CD4-positive, alpha-beta memory T cell (primary cell): ENCODE measurements at regions of chr16 and their contacts with region 1.

Region 1: DNA sequence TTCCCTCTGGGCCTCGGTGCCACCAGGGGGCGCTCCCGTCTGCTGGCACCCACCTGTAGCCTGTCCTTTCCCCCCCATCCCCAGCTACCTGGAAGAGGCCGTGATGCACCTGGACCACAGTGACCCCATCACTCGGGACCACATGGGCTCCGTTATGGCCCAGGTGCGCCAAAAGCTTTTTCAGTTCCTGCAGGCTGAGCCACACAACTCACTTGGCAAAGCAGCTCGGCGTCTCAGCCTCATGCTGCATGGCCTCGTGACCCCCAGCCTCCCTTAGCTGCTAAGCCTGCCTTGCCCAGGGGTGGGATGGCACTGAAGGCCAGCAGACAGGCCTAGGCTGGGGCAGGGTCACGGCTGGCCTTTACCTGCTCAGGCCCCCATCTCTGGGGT is 818 bp upstream of the NRN1L start:
- DNase-seq: peak; percentile 68 to 75 (median 71)
- H3K4me3 ChIP-seq: no peak overlapping the region
- H3K4me3 Mint-ChIP-seq: no peak overlapping the region
- H3K27ac ChIP-seq: no peak overlapping the region
- H3K27ac Mint-ChIP-seq: peak overlapping the region in 4 of 7 donors; percentile 22 to 83 (median 40)
- H3K4me1 ChIP-seq: no peaks in the 10 kb centered on the region
- H3K4me1 Mint-ChIP-seq: peaks cover 0 to 1% (median 0%) of the 10 kb centered on the region in 4 donors
- H3K27me3 ChIP-seq: no peaks in the 10 kb centered on the region
- H3K27me3 Mint-ChIP-seq: no peaks in the 10 kb centered on the region

Region 2: GRCh38 chr16:67767953-67768352 is 115.9 kb before region 1 on chr16:
- CTCF ChIA-PET with region 1: no interaction called
- POLR2A ChIA-PET with region 1: no interaction called
- intact Hi-C with region 1: no loop called
- DNase-seq: no peak
- H3K4me3 ChIP-seq: no peak overlapping the region
- H3K4me3 Mint-ChIP-seq: no peak overlapping the region
- H3K27ac ChIP-seq: no peak overlapping the region
- H3K27ac Mint-ChIP-seq: no peak overlapping the region
- H3K4me1 ChIP-seq: no peaks in the 10 kb centered on the region
- H3K4me1 Mint-ChIP-seq: peaks cover 1 to 10% (median 8%) of the 10 kb centered on the region in 4 donors
- H3K27me3 ChIP-seq: no peaks in the 10 kb centered on the region
- H3K27me3 Mint-ChIP-seq: no peaks in the 10 kb centered on the region

Region 3: GRCh38 chr16:67910158-67910557 is 26.3 kb after region 1 on chr16:
- CTCF ChIA-PET with region 1: interaction called, 10 read pairs
- POLR2A ChIA-PET with region 1: no interaction called
- intact Hi-C with region 1: no loop called
- DNase-seq: no peak
- H3K4me3 ChIP-seq: no peak overlapping the region
- H3K4me3 Mint-ChIP-seq: no peak overlapping the region
- H3K27ac ChIP-seq: no peak overlapping the region
- H3K27ac Mint-ChIP-seq: peak overlapping the region in 1 of 7 donors; percentile 8
- H3K4me1 ChIP-seq: no peaks in the 10 kb centered on the region
- H3K4me1 Mint-ChIP-seq: peaks cover 3 to 26% (median 12%) of the 10 kb centered on the region in 4 donors
- H3K27me3 ChIP-seq: no peaks in the 10 kb centered on the region
- H3K27me3 Mint-ChIP-seq: no peaks in the 10 kb centered on the region

Region 4: GRCh38 chr16:67928561-67929364 is 44.9 kb after region 1 on chr16:
- CTCF ChIA-PET with region 1: interaction called, 61 read pairs
- POLR2A ChIA-PET with region 1: interaction called, 6 read pairs
- intact Hi-C with region 1: loop called (anchors 1 kb)
- DNase-seq: peak; percentile 70 to 75 (median 72)
- H3K4me3 ChIP-seq: no peak overlapping the region
- H3K4me3 Mint-ChIP-seq: no peak overlapping the region
- H3K27ac ChIP-seq: no peak overlapping the region
- H3K27ac Mint-ChIP-seq: peak overlapping the region; percentile 22 to 74 (median 69)
- H3K4me1 ChIP-seq: peaks cover 7% of the 10 kb centered on the region
- H3K4me1 Mint-ChIP-seq: peaks cover 3 to 16% (median 8%) of the 10 kb centered on the region in 4 donors
- H3K27me3 ChIP-seq: no peaks in the 10 kb centered on the region
- H3K27me3 Mint-ChIP-seq: no peaks in the 10 kb centered on the region

Region 5: DNA sequence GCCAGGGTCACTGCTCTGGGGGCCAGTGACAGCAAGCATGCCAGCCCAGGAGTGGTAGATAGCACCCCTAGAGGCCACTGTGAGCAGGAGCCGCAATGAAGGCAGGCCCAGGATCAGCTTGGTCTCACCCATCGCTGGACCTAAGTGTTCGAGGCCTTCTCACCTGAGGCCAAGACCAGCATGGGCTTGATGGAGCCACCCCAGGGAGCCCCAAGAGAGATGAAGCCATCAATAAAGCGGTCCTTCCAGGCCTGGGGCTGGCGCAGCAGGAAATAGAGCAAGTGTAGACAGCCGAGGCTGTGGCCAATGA is 58.3 kb after region 1 on chr16:
- CTCF ChIA-PET with region 1: interaction called, 25 read pairs
- POLR2A ChIA-PET with region 1: interaction called, 8 read pairs
- intact Hi-C with region 1: no loop called
- DNase-seq: peak in 4 of 5 donors; percentile 17 to 32 (median 22)
- H3K4me3 ChIP-seq: no peak overlapping the region
- H3K4me3 Mint-ChIP-seq: no peak overlapping the region
- H3K27ac ChIP-seq: peak overlapping the region; percentile 9
- H3K27ac Mint-ChIP-seq: peak overlapping the region in 2 of 7 donors; percentile 70 to 79
- H3K4me1 ChIP-seq: peaks cover 39% of the 10 kb centered on the region
- H3K4me1 Mint-ChIP-seq: peaks cover 18 to 33% (median 25%) of the 10 kb centered on the region in 4 donors
- H3K27me3 ChIP-seq: no peaks in the 10 kb centered on the region
- H3K27me3 Mint-ChIP-seq: no peaks in the 10 kb centered on the region

Region 6: DNA sequence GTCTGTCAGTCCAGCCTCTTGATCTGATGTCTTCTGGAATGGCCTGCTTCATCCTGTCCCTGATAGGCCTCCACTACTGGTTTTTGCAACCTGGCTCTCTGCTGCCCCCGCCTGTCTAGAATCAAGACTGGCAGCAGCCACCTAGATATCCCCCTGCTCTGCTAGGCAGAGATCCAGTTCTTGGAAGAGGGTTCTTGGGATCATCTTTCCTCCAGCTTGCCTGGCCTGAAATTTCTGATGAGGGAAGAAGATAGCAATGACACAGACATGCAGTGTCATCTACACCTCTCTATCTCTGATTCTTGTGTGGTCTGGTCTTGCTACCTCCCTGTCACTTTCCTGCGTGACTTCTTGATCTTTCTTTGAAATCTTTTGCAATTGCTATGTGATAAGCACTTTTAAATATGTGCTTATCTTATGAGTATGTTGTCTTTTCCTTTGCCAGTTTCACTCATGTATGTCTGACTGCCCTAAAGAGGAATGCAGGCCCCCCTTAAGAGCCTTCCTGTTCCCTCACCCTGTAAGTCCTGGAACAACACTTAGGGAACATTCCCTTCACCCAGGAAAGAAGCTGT is 181.0 kb after region 1 on chr16:
- CTCF ChIA-PET with region 1: interaction called, 9 read pairs
- POLR2A ChIA-PET with region 1: no interaction called
- intact Hi-C with region 1: loop called (anchors 1 kb)
- DNase-seq: peak; percentile 60 to 78 (median 68)
- H3K4me3 ChIP-seq: no peak overlapping the region
- H3K4me3 Mint-ChIP-seq: peak overlapping the region in 6 of 8 donors; percentile 1 to 74 (median 34)
- H3K27ac ChIP-seq: peak overlapping the region; percentile 42
- H3K27ac Mint-ChIP-seq: peak overlapping the region; percentile 79 to 96 (median 84)
- H3K4me1 ChIP-seq: peaks cover 79% of the 10 kb centered on the region
- H3K4me1 Mint-ChIP-seq: peaks cover 51 to 90% (median 71%) of the 10 kb centered on the region in 4 donors
- H3K27me3 ChIP-seq: no peaks in the 10 kb centered on the region
- H3K27me3 Mint-ChIP-seq: no peaks in the 10 kb centered on the region

Region 7: DNA sequence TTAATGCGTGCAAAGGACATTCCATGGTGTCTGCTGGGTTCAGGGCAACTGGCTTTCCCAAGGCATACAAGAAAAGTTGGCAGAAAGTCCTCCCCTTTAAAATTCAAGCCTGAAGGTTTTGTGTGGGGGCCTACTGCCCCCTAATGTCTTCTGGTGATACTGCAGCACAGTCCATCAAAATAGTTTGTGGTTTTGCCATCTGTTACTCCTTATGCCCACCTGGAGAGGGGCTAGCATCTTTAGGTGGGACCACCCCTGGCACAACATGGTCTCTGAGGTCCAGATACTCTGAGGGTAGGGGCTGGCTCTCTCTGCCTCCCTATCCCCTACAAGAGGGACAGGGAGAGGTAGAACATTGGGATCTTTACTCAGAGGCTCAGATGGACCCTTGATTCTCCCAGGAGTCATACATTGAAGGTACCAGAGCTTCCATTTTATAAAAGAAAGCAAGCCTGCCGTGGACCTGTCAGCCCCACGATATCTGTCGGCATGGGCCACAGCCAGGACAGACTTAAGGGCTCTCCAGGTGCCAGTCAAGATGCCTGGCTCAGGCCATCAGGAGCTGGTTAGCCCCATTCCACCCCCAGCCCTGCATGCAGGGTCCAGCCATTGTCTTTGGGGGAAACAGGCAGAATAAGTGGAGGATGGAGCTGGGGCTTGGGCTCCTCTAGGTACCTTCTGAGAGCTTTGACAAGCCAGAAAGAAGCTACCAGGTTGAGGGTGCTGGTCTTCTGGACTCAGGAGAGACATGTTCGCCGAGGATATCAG is 345.7 kb after region 1 on chr16:
- CTCF ChIA-PET with region 1: interaction called, 6 read pairs
- POLR2A ChIA-PET with region 1: no interaction called
- intact Hi-C with region 1: loop called (anchors 1 kb)
- DNase-seq: peak in 4 of 5 donors; percentile 44 to 55 (median 52)
- H3K4me3 ChIP-seq: no peak overlapping the region
- H3K4me3 Mint-ChIP-seq: peak overlapping the region in 1 of 8 donors; percentile 31
- H3K27ac ChIP-seq: no peak overlapping the region
- H3K27ac Mint-ChIP-seq: peak overlapping the region in 6 of 7 donors; percentile 10 to 89 (median 51)
- H3K4me1 ChIP-seq: peaks cover 23% of the 10 kb centered on the region
- H3K4me1 Mint-ChIP-seq: peaks cover 21 to 51% (median 34%) of the 10 kb centered on the region in 4 donors
- H3K27me3 ChIP-seq: no peaks in the 10 kb centered on the region
- H3K27me3 Mint-ChIP-seq: no peaks in the 10 kb centered on the region

Region 8: DNA sequence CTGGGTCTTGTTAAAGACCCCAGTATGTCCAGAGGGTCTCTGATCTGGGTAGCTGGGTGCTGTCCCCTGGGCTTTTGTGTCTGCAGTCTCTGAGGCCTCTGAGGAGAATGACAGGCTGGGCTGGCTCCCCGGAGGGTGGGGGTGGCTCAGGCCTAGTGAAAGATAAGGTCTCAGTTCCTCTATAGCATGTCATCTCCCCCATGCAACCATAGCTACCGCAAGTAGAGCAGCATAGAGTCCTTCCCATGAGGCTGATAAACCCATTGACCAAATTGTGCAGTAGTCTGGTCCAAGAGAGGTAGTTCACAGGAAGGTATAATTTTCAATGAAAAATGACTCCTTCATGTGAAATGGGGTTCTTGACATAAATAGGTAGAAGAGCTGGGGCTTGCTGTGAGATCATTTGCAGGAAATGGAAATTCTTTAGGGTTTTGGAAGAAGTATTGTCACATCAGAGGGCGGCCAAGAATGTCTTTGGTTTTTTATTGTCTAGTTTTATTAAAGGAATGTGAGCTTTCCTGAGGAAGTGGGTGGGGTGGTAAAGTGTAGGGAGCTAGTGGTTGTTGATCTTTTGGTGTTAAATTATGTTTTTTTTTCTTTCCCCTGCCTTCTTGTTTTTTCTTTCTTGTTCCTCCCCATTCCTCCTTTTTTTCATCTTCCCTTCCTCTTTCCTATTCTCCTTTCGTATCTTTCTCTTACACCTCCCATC is 405.9 kb after region 1 on chr16:
- CTCF ChIA-PET with region 1: no interaction called
- POLR2A ChIA-PET with region 1: no interaction called
- intact Hi-C with region 1: no loop called
- DNase-seq: peak; percentile 41 to 72 (median 56)
- H3K4me3 ChIP-seq: peak overlapping the region in 1 of 2 donors; percentile 4
- H3K4me3 Mint-ChIP-seq: peak overlapping the region; percentile 32 to 83 (median 66)
- H3K27ac ChIP-seq: peak overlapping the region; percentile 52
- H3K27ac Mint-ChIP-seq: peak overlapping the region; percentile 82 to 91 (median 89)
- H3K4me1 ChIP-seq: peaks cover 83% of the 10 kb centered on the region
- H3K4me1 Mint-ChIP-seq: peaks cover 63 to 92% (median 80%) of the 10 kb centered on the region in 4 donors
- H3K27me3 ChIP-seq: no peaks in the 10 kb centered on the region
- H3K27me3 Mint-ChIP-seq: no peaks in the 10 kb centered on the region